Heart right ventricle (tissue), 16 donors: ENCODE measurements at regions of chr10 and their contacts with region 1.

Region 1: DNA sequence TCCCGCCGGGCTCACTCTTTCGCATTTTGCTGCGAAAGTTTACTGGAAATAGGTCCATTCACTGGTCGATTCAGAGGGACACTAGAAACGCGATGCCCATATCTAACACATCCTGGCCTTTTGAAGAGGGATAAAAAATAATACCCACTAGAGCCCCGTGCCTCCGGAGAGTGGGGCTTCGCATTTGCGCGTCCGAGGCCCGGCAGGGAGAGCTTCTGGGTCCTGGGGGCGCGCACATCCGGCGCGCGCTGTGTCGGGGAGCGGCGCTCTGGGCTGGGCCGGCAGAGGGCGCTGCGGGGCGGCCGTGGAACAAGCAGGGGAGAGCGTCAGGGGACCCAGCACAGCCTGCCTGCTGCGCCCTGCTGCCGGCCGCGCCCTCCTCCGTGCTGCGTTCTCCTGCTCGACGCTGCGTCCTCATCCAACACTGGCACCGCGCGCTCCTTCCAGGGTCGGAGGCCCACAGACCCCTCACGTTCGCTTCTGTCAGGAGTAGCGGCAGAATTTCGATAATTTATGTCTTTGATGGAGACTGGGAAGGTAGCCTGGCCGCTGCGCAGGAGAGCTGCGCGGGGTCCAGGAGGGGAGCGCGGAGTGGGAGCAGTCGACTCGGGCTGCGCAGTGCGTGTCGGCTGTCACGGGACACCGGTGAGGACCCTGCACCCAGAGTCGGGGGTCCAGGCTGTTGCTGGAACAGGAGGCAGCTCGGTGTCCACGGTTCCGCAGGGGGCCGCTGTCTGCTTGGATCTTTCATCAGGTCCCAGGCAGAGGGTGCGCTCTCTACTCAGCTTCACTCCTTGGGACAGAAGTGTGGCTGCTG is 41.5 kb upstream of the ZNF32 start:
- DNase-seq: peak; percentile 88 to 92
- ATAC-seq: peak; percentile 95 to 99 (median 98)
- H3K4me3 ChIP-seq: peak overlapping the region; percentile 39 to 77 (median 64)
- H3K27ac ChIP-seq: peak overlapping the region; percentile 66 to 99 (median 92)
- H3K4me1 ChIP-seq: peaks cover 3 to 69% (median 31%) of the 10 kb centered on the region in 9 donors
- H3K27me3 ChIP-seq: peaks cover 0 to 4% (median 0%) of the 10 kb centered on the region in 7 donors
- CTCF ChIP-seq: peak; percentile 74 to 92 (median 87)

Region 2: DNA sequence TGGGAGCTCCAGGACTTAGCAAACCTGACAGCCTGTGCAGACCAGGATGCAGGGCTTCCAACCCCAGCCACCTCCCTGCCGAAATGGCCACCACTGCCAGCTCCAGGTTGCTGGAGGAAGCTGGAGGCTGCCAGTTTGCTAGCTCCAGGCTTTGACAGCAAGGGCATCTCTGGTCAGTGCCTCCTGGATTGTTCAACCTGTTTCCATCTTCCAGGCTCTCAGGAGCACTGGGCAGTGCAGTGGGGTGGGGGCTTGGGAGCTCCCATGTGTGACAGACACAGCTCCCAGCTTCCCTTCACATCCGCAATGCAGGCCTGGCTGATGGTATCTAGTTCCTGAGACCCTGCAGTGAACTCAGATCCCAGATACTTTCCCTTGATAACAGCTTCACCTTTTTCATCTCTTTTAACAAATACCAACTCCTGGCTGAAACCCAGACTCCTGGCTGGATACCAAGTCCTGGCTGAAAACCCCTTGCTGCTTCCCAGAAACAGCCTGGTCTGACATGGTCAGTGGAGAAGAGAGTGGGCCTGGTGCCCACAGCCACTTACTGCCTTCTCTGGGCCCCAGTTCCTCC is 634.1 kb before region 1 on chr10:
- intact Hi-C with region 1: no loop called
- DNase-seq: no peak
- ATAC-seq: no peak
- H3K4me3 ChIP-seq: no peak overlapping the region
- H3K27ac ChIP-seq: no peak overlapping the region
- H3K4me1 ChIP-seq: peaks cover 0 to 16% (median 0%) of the 10 kb centered on the region in 9 donors
- H3K27me3 ChIP-seq: peaks cover 0 to 19% (median 9%) of the 10 kb centered on the region in 7 donors
- CTCF ChIP-seq: no peak

Region 3: DNA sequence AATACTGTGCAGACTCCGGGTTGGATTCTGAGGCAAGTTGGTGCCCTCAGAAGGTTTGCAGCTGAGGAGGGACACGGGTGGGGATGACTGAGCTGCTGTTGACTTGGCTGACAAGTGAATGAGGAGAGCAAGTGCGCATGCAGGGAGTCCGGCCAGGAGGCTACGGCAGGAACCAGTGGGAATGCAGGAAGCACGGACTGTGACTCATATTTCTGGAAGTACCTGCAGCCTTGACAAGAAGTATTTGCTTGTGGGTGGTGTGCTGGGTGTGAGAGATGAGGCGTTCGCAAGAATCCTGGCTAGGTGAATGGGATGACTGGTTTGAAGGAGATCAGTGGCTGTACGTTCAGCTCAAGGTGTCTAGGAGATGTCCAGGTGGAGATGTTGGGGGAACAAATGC is 349.5 kb before region 1 on chr10:
- intact Hi-C with region 1: no loop called
- DNase-seq: no peak
- ATAC-seq: peak in 1 of 8 donors; percentile 56
- H3K4me3 ChIP-seq: no peak overlapping the region
- H3K27ac ChIP-seq: no peak overlapping the region
- H3K4me1 ChIP-seq: peaks cover 0 to 4% (median 0%) of the 10 kb centered on the region in 9 donors
- H3K27me3 ChIP-seq: peaks cover 0 to 36% (median 29%) of the 10 kb centered on the region in 7 donors
- CTCF ChIP-seq: no peak

Region 4: DNA sequence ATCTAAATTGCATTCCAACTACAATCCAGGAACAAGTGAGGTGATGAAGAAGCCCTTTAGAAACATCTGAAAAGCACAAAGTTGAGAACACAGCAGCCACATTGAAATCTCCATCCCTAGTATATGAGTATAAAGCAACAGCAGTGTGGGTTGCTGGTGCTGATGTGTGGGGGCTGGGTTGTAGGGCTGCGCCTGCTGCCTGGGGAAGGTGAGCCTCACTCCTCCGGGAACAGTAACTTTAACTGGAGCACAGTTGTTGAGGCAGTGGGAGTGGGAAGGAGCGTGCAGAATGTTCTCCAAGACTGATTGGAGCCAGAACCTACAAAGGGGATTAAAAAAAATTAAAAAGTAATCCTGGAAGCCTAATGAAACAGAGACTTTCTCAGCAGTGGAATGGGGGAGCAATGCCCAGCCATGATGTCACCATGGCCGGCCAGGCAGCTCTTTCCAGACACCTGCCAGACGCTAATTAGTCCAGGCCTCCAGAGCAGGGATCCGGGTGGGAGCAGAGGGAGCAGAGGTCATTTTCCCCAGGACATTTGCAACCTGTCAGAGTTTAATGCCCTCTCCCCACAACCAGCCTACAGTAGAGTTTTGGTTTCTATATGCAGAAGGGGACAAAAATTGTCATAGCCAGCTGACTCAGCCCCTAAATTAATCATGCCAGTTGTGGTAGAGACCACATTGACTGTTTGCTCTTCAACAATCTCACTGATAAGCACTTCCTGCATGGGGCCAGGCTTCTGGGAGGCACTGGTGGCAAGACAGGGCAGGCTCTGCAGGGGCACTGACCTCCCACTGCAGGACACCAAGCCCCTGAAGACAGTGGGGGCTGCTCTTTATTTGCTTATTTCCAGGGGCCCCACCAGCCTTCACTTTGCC is 91.6 kb after region 1 on chr10:
- intact Hi-C with region 1: loop called in 4 of 10 experiments (anchors 5 to 10 kb)
- DNase-seq: no peak
- ATAC-seq: peak in 4 of 8 donors; percentile 18 to 61 (median 29)
- H3K4me3 ChIP-seq: no peak overlapping the region
- H3K27ac ChIP-seq: no peak overlapping the region
- H3K4me1 ChIP-seq: peaks cover 0 to 21% (median 7%) of the 10 kb centered on the region in 9 donors
- H3K27me3 ChIP-seq: no peaks in the 10 kb centered on the region
- CTCF ChIP-seq: no peak

Region 5: GRCh38 chr10:43793704-43794103 is 103.5 kb after region 1 on chr10:
- intact Hi-C with region 1: no loop called
- DNase-seq: no peak
- ATAC-seq: no peak
- H3K4me3 ChIP-seq: no peak overlapping the region
- H3K27ac ChIP-seq: no peak overlapping the region
- H3K4me1 ChIP-seq: peaks cover 0 to 8% (median 0%) of the 10 kb centered on the region in 9 donors
- H3K27me3 ChIP-seq: no peaks in the 10 kb centered on the region
- CTCF ChIP-seq: no peak

Region 6: DNA sequence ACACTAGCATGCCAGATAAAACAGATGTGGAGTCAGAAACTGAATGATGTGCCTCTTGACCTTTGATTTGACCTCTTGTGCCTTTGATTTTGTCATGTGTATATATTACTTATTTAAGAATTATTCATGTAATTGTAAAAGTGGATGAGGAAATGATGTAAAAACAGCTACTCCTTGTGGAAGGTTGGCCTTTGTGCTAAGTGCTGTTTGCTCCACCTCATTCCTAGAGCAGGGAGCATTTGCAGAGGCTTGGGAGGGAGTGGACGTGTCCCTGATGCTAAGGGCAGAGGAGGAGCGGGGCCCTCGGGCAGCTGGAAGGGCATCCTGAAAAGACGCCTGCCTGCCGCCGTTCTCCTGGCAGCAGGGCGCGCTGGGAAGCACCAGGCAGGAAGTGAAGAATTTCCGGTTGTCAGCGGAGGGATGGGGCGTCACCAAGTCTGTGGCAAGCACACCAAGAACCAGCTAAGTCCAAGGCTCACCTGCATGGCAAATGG is 156.1 kb after region 1 on chr10:
- intact Hi-C with region 1: loop called in 1 of 10 experiments (anchors 10 kb)
- DNase-seq: peak; percentile 50 to 54
- ATAC-seq: peak; percentile 68 to 86 (median 76)
- H3K4me3 ChIP-seq: peak overlapping the region in 3 of 10 donors; percentile 15 to 31 (median 26)
- H3K27ac ChIP-seq: peak overlapping the region in 9 of 10 donors; percentile 33 to 89 (median 57)
- H3K4me1 ChIP-seq: peaks cover 0 to 42% (median 18%) of the 10 kb centered on the region in 9 donors
- H3K27me3 ChIP-seq: no peaks in the 10 kb centered on the region
- CTCF ChIP-seq: peak in 2 of 9 donors; percentile 33 to 40

Region 7: DNA sequence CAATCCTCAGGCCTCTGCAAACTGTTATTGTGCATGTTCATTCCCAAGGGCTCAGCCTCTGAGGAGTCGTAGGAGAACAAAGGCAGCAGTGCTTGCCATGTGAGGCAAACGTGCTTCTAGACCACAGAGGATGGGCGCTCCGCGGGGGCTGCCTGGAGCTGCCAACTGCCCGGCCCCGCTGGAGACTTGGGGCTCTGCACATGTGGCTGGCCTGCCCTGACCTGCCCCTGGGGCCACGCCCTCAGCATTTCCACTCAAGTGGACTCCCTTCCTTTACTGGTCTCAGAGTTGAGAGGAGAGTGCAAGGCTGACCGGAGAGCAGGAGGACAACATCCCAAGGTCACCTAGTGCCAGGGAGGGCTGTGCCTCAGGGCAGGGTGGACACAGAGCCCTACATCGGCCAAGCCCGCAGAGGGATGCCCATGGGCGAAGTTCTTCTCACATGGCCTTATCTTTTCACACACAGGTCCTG is 180.8 kb after region 1 on chr10:
- intact Hi-C with region 1: loop called in 2 of 10 experiments (anchors 5 kb)
- DNase-seq: peak; percentile 67 to 79
- ATAC-seq: peak; percentile 74 to 93 (median 90)
- H3K4me3 ChIP-seq: no peak overlapping the region
- H3K27ac ChIP-seq: peak overlapping the region; percentile 13 to 86 (median 59)
- H3K4me1 ChIP-seq: peaks cover 0 to 61% (median 30%) of the 10 kb centered on the region in 9 donors
- H3K27me3 ChIP-seq: no peaks in the 10 kb centered on the region
- CTCF ChIP-seq: no peak

Region 8: DNA sequence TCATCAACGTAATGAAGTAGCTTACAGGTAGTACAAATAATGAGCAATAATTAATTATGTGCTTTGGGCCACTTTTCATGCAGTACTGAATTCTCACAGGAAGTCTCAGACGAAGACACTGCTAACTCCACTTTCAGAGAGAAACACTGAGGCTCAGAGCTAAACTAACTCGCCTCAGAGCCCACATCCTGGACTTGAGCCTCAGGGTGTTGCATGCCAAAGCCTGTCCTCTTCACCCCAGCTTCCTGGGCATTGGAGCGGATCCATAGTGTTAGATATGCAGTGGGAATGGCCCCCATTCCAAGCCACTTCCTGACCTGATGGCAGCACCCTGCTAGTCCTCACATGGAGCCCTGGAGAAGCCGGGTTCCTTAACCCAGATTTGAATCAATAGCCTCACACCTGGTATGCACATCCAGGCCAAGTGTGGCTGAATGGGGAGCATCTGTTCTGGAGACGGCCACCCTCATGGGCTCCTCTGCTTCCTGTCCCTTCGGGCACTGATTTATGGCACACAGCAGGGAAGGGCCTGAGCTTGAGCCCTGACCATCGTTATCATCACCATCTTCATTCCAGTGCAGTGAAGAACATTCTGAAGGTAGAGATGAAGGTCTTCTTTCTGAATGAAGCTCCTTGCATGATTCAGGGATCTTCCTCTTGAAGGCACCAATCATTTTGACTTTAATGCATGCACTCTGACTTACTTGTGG is 223.7 kb after region 1 on chr10:
- intact Hi-C with region 1: loop called in 3 of 10 experiments (anchors 5 to 10 kb)
- DNase-seq: no peak
- ATAC-seq: no peak
- H3K4me3 ChIP-seq: no peak overlapping the region
- H3K27ac ChIP-seq: peak overlapping the region in 1 of 10 donors; percentile 18
- H3K4me1 ChIP-seq: peaks cover 2 to 37% (median 23%) of the 10 kb centered on the region in 9 donors
- H3K27me3 ChIP-seq: no peaks in the 10 kb centered on the region
- CTCF ChIP-seq: no peak

Region 9: DNA sequence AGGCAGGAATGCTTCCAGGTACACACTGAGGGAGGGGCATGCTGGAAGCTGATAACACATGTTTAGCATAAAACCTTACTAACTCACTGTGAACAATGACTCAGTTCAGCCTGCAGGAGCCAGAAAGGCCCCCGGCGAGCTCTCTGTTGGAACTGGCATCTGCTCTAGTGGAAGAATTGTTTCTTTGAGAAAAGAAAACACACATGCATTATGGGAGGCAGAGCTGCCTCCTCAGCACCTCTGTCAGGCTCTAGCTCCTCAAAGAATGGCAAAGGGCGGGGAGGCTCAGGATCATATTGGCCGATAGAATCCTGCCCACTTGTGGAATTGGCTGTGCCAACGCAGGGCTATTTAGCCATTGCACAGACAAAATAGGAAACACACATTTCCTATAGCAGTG is 356.4 kb after region 1 on chr10:
- intact Hi-C with region 1: loop called in 5 of 10 experiments (anchors 2 to 10 kb)
- DNase-seq: no peak
- ATAC-seq: peak in 1 of 8 donors; percentile 10
- H3K4me3 ChIP-seq: no peak overlapping the region
- H3K27ac ChIP-seq: peak overlapping the region in 3 of 10 donors; percentile 37 to 77 (median 72)
- H3K4me1 ChIP-seq: peaks cover 0 to 61% (median 18%) of the 10 kb centered on the region in 9 donors
- H3K27me3 ChIP-seq: no peaks in the 10 kb centered on the region
- CTCF ChIP-seq: peak in 3 of 9 donors; percentile 7 to 38 (median 12)

Region 10: GRCh38 chr10:44386546-44387052 is 696.4 kb after region 1 on chr10:
- intact Hi-C with region 1: loop called in 8 of 10 experiments (anchors 1 to 5 kb)
- DNase-seq: peak; percentile 51 to 79
- ATAC-seq: peak; percentile 80 to 87 (median 83)
- H3K4me3 ChIP-seq: peak overlapping the region in 5 of 10 donors; percentile 19 to 95 (median 25)
- H3K27ac ChIP-seq: peak overlapping the region in 3 of 10 donors; percentile 81 to 92 (median 91)
- H3K4me1 ChIP-seq: peaks cover 3 to 51% (median 22%) of the 10 kb centered on the region in 9 donors
- H3K27me3 ChIP-seq: peaks cover 0 to 48% (median 0%) of the 10 kb centered on the region in 7 donors
- CTCF ChIP-seq: peak; percentile 87 to 95 (median 91)